Activated naive CD4-positive, alpha-beta T cell treated with anti-CD3 and anti-CD28 coated beads for 36 hours (primary cell): ENCODE measurements at regions of chr5 and their contacts with region 1.

Region 1: DNA sequence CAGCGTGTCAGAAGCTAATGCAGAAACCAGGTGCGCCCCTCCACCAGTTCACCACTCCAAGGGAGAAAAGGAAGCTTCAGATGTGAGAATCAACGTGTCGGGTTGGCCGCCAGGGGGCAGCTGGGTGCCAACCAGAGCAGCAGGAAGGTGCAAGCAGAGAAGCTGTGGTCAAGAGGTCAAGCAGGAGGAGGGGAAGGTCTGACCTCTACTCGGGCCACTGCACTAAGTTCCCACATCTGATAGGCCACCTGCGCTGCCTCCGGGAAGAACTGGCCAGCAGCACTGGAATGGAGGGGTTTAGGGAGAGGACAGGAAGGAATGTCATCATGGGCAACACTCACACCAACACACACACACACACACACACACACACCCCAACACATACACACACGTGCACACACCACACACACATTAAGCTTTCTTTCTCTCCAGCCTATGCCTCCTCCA is 31.4 kb downstream of the ANXA6 start:
- DNase-seq: peak; percentile 72
- H3K4me3 Mint-ChIP-seq: no peak overlapping the region
- H3K27ac Mint-ChIP-seq: peak overlapping the region; percentile 90
- H3K4me1 Mint-ChIP-seq: peaks cover 69% of the 10 kb centered on the region
- H3K27me3 Mint-ChIP-seq: no peaks in the 10 kb centered on the region

Region 2: GRCh38 chr5:151051066-151051930 is 74.9 kb before region 1 on chr5:
- CTCF ChIA-PET with region 1: interaction called, 21 read pairs
- intact Hi-C with region 1: no loop called
- DNase-seq: peak; percentile 85
- H3K4me3 Mint-ChIP-seq: no peak overlapping the region
- H3K27ac Mint-ChIP-seq: peak overlapping the region; percentile 16
- H3K4me1 Mint-ChIP-seq: no peaks in the 10 kb centered on the region
- H3K27me3 Mint-ChIP-seq: no peaks in the 10 kb centered on the region

Region 3: DNA sequence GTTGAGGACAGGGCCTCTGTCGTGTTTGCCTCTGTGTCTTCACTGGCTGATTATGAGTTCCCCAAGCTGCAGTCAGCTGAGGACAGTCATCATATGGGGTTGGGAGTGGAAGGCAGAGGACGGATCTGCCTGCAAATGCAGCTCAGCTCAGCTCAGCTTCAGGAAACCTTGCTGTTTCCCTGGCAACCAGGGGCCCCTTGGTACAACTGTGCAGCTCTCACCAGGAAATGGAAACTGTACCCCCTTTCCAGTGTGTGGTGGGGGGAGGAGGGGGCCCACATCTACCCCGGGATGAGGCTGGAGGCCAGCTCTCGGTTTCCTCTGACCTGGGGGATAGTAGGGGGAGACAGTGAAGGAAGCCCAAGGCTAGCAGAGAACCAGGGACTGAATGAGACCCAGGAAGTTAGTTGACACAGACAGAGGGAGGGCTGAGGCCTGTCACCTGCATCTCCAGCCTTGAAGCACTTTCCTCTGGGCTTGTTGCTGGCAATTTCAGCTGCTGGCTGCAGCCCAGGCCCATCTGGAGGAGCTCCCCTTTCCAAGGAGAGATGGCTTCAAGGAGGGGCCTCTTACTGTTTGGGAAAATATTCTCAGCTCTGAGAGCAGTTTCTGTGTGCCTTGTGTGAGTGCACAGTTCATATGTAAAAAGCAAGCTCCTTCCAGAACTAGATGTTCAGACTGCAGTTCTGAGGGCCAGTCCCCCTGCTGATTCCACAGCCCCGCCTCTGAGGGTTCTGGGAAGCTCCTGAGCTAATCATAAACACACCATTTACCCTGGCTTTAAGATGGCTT is 24.4 kb after region 1 on chr5:
- CTCF ChIA-PET with region 1: interaction called, 192 read pairs
- intact Hi-C with region 1: loop called (anchors 1 kb)
- DNase-seq: peak; percentile 91
- H3K4me3 Mint-ChIP-seq: peak overlapping the region; percentile 64
- H3K27ac Mint-ChIP-seq: peak overlapping the region; percentile 90
- H3K4me1 Mint-ChIP-seq: peaks cover 94% of the 10 kb centered on the region
- H3K27me3 Mint-ChIP-seq: no peaks in the 10 kb centered on the region

Region 4: DNA sequence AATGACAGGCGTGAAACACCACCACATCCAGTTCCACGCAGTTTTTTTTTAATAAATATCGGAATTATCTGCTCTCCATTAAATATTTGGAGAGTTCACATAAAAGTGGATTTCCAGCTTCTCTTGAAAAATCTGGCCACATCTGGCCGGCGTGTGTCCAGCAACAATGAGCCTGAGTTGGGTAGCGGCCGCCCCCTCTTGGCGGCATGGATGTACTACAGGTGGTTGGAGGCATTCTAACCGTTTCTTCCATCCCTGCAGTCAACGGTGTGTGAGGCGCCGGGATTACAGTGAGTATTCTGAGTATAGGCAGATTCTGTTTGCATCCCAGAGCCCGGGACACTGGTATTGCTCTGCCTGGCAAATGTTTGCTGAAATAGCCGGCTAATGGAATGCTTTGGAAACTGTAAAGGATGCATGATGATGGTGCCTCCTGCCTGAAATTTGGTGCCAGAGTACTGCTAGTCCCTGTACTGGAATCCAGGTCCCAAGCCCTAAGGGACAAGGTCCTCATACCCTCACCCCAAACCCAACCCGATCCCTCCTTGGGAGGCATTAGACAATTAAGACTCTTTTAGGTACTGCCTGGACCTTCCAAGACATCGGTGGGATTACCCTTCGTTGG is 113.1 kb after region 1 on chr5:
- CTCF ChIA-PET with region 1: interaction called, 36 read pairs
- intact Hi-C with region 1: loop called (anchors 1 kb)
- DNase-seq: peak; percentile 64
- H3K4me3 Mint-ChIP-seq: no peak overlapping the region
- H3K27ac Mint-ChIP-seq: no peak overlapping the region
- H3K4me1 Mint-ChIP-seq: peaks cover 18% of the 10 kb centered on the region
- H3K27me3 Mint-ChIP-seq: no peaks in the 10 kb centered on the region

Region 5: DNA sequence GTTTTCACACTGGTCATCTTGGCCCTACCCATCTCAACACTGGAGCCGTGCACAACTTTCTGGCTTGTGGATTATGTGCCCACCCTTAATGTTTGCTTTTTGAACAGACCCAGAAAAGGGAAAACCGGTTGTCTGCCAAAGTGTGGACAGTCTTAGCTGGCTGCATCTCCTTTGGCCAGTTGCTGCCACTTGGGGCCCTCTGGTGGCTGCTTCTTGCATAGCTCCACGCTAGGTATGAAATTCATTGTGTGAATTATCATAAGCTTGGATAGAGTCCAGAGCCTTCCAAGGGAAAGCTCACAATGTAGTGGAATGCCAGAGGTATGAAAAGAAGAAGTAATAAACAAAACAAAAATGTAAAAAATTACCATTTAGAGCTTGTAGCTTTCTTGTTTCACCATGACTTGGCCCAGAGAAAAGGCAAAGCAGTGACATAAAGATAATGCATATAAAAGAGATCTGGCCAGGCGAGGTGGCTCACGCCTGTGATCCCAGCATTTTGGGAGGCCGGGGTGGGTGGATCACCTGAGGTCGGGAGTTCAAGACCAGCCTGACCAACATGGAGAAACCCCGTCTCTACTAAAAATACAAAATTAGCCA is 189.9 kb after region 1 on chr5:
- CTCF ChIA-PET with region 1: no interaction called
- intact Hi-C with region 1: loop called (anchors 1 kb)
- DNase-seq: peak; percentile 81
- H3K4me3 Mint-ChIP-seq: no peak overlapping the region
- H3K27ac Mint-ChIP-seq: no peak overlapping the region
- H3K4me1 Mint-ChIP-seq: no peaks in the 10 kb centered on the region
- H3K27me3 Mint-ChIP-seq: no peaks in the 10 kb centered on the region